ENCODE measurements at regions of chr14 and their contacts with region 1.

Region 1: DNA sequence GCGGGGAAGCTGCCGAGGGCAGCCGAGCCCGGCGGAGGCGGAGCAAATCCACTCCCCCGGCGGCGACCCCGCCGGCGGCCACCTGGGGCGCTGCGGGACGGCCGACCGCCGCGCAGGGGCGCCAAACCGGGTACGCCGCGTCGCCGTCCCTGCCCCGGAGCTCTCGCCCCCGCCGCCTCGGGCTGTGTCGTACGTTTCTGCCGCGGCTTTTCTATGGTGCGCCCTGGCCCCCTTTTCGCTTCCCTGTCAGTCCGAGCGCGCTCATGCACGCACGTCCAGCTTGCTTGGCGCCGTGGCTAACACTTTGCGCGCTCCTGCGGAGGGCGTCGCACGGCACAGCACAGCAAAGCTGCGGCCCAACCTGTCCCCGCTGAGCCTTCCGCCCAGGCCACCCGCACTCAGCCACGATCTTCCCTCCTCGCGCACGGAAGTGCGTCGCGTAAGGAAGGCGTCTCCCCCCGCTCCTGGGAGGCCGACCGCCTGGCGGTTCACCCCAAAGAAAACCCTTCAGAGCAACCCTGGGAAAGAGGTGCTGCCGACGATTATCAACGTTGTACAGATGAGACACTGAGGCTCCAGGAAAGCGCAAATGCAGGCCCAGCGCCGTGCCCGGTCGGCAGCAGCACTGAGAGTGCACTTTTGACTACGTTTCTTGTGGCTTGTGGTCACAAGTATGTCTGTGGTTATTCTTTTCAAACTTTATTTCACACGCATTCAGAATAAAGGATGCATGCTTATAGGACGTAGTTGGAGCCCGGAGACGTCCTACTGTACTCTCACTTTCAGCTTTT is at the start of gene HECTD1:
- DNase-seq: peak; percentile 94
- ATAC-seq: peak; percentile 77
- H3K4me3 Mint-ChIP-seq: peak within 1 kb of the TSS; percentile 85
- H3K27ac Mint-ChIP-seq: peak within 1 kb of the TSS; percentile 99
- H3K4me1 Mint-ChIP-seq: peaks cover 38% of the 10 kb centered on the region
- H3K27me3 Mint-ChIP-seq: no peaks in the 10 kb centered on the region
- total RNA-seq, gene HECTD1: 87.1 to 89.5 TPM

Region 2: DNA sequence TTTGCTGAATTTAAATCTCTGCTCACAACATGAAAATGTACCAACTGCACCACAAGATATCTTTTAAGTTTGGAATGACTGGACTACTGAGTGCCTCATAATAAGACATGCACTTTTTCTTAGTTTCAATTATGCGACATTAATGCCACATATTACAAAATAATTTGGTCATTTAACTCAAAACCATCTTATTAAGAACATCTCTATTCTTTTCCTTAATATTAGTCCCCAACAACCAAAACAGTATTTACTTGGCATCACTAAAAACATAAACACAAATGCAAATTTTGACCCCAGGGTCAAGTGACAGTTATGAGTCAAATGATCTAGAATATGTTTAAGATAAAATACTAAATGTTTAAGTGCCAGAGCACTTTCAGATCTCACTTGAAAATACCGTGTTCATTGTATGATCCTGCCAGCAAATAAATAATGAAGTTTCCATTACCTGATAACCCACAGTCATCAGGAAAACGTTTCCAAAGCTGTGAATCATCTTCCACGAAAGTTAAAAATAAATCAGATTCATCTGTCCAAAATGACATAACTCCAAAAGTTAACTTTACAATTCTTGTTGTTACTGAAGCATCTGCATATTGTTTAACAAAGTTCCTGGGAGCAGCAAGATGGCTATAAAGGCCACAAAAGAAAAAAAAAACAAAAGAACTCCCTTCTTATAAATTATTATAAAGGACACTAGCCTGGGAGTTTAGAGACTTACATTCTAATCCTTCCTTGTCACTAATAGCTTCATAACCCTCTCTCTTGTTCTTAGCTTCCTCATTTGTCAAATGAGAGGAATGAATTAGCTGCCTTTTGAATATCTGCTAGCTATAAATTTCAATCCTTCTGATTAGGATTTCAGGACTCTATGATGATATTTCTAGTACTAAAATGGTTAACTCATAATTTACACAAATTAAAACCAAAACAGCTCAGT is 213.0 kb before region 1 on chr14:
- CTCF ChIA-PET with region 1: no interaction called
- POLR2A ChIA-PET with region 1: no interaction called
- intact Hi-C with region 1: loop called (anchors 10 kb)
- DNase-seq: no peak
- ATAC-seq: peak; percentile 61
- H3K4me3 Mint-ChIP-seq: peak overlapping the region; percentile 38
- H3K27ac Mint-ChIP-seq: peak overlapping the region; percentile 85
- H3K4me1 Mint-ChIP-seq: peaks cover 43% of the 10 kb centered on the region
- H3K27me3 Mint-ChIP-seq: no peaks in the 10 kb centered on the region

Region 3: DNA sequence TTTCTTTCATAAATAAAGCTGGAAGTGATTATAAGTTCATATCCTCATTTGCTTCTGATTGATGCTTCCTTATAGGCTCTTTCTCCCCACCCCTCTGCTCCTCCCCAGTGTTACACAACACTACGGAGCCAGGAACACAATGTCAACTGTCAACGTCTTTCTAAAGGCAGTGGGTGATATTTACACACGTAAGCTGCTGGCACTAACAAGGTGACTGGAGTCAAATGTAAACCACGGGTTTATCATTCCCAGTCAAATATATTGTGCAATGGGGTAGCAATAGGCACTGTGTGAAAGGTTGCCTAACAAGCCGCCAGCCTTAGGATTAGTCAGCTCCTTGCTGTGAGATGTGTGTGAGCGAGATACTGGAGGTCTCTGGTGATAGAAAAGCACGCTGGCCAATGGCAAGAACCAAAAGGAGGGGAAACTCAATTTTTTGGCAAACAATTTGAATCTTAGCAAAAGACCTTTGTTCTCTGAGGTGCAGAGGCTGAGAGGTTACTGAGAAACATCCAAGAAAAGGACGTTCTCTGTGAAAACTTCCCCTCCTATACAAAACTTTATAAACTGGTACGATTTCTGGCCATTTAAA is 21.8 kb after region 1 on chr14:
- CTCF ChIA-PET with region 1: interaction called, 12 read pairs
- POLR2A ChIA-PET with region 1: no interaction called
- intact Hi-C with region 1: no loop called
- DNase-seq: no peak
- ATAC-seq: peak; percentile 51
- H3K4me3 Mint-ChIP-seq: no peak overlapping the region
- H3K27ac Mint-ChIP-seq: no peak overlapping the region
- H3K4me1 Mint-ChIP-seq: no peaks in the 10 kb centered on the region
- H3K27me3 Mint-ChIP-seq: no peaks in the 10 kb centered on the region

Region 4: GRCh38 chr14:31388687-31389413 is 180.9 kb after region 1 on chr14:
- CTCF ChIA-PET with region 1: no interaction called
- POLR2A ChIA-PET with region 1: no interaction called
- intact Hi-C with region 1: loop called in 1 of 2 experiments (anchors 2 kb)
- DNase-seq: peak; percentile 27
- ATAC-seq: peak; percentile 68
- H3K4me3 Mint-ChIP-seq: no peak overlapping the region
- H3K27ac Mint-ChIP-seq: peak overlapping the region; percentile 75
- H3K4me1 Mint-ChIP-seq: peaks cover 28% of the 10 kb centered on the region
- H3K27me3 Mint-ChIP-seq: no peaks in the 10 kb centered on the region

Region 5: DNA sequence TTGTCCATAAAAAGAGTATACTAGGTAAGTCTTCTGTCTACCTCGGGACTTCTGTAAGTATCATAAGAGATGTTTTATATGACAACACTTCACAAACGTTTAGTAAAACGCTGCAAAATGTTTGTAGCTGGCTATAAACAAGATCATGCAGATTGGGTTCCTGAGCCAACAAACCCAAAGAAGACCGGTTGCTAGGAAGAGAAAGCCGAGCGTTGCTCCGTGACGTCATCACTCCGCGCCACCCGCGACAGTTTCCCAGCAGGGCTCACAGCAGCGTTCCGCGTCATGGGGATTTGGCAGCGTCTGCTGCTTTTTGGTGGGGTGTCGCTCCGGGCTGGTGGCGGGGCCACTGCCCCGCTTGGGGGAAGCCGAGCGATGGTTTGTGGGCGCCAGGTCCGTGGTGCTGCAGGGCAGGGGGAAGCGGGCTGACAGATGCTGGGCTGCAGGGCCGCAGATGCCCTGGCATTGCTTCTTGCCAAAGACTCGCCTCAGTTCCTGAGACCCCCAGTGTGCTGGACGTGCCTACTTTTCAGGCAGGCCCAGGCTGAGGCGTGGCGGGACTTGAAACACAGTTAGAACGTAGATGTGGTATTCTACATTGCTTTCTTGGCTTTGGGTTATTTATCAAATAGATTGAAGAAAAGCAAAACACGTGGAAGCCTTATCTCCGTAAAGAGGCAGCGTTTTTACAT is 353.4 kb after region 1 on chr14 and contains the start of gene NUBPL:
- CTCF ChIA-PET with region 1: no interaction called
- POLR2A ChIA-PET with region 1: no interaction called
- intact Hi-C with region 1: loop called in 1 of 2 experiments (anchors 1 kb)
- DNase-seq: peak; percentile 98
- ATAC-seq: peak; percentile 96
- H3K4me3 Mint-ChIP-seq: peak within 1 kb of the TSS; percentile 92
- H3K27ac Mint-ChIP-seq: peak within 1 kb of the TSS; percentile 95
- H3K4me1 Mint-ChIP-seq: peaks cover 23% of the 10 kb centered on the region
- H3K27me3 Mint-ChIP-seq: peaks cover 6% of the 10 kb centered on the region
- total RNA-seq, gene NUBPL: 9.5 to 14.9 TPM

Region 6: GRCh38 chr14:31592631-31593030 is 384.7 kb after region 1 on chr14:
- CTCF ChIA-PET with region 1: no interaction called
- POLR2A ChIA-PET with region 1: no interaction called
- intact Hi-C with region 1: no loop called
- DNase-seq: no peak
- ATAC-seq: no peak
- H3K4me3 Mint-ChIP-seq: no peak overlapping the region
- H3K27ac Mint-ChIP-seq: no peak overlapping the region
- H3K4me1 Mint-ChIP-seq: no peaks in the 10 kb centered on the region
- H3K27me3 Mint-ChIP-seq: no peaks in the 10 kb centered on the region

Region 7: DNA sequence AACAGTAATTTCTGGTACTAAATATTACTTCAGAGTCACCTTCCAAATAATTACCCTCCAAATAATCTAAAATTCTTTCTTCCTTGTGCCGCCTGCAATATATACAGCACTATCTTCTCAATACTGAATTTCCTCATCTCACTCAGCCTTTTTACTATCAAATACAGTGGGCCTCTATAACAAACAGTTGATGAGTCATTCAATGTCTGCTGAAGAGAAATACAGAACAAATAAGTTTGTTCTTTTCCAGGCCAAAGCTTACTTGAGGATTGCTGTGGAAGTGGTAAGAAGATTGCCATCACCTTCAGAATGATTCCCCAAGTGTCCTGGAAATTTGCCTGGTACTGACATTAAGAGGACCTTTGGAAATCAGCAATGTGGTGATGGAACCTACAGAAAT is 650.9 kb after region 1 on chr14:
- CTCF ChIA-PET with region 1: no interaction called
- POLR2A ChIA-PET with region 1: no interaction called
- intact Hi-C with region 1: no loop called
- DNase-seq: no peak
- ATAC-seq: no peak
- H3K4me3 Mint-ChIP-seq: no peak overlapping the region
- H3K27ac Mint-ChIP-seq: no peak overlapping the region
- H3K4me1 Mint-ChIP-seq: no peaks in the 10 kb centered on the region
- H3K27me3 Mint-ChIP-seq: no peaks in the 10 kb centered on the region